Posterior vena cava (tissue), 2 donors: ENCODE measurements at regions of chr20 and their contacts with region 1.

Region 1: DNA sequence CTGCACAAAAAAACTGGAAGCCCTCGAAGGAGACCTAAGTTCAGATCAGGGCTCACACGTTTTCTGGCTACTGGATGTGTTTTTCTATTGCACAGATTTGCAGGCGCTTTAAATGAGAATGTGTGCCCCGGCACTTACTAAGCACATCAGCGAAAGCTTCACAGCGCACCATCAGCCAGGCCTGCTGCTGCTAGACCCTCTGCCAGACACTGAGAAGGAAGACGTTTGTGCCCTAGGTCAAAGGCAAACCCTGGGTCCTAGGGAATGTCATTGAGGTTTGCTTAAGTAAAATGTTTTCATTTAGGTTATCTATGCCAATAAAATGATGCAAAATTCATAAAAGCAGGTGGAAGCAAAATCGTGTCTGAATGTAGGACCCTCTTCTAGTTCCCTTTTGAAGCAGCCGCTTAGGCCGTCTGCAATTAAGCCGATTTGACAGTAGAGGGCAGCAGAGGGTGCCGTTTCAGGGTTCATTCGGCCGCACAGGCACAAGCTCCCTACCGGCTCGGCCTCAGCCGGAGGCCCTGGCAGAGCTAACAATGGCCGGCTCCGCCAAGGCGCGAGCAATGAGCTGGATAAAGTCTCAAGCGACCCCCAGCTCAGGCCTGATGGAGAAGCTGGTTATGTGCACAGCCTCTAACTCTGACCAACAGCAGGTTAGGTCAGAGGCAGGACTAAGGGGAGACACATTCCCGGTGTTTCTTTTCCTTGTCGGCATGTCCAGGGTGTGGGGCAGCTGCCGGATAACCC is 107.2 kb upstream of the FOXA2 start:
- DNase-seq: peak; percentile 94

Region 2: DNA sequence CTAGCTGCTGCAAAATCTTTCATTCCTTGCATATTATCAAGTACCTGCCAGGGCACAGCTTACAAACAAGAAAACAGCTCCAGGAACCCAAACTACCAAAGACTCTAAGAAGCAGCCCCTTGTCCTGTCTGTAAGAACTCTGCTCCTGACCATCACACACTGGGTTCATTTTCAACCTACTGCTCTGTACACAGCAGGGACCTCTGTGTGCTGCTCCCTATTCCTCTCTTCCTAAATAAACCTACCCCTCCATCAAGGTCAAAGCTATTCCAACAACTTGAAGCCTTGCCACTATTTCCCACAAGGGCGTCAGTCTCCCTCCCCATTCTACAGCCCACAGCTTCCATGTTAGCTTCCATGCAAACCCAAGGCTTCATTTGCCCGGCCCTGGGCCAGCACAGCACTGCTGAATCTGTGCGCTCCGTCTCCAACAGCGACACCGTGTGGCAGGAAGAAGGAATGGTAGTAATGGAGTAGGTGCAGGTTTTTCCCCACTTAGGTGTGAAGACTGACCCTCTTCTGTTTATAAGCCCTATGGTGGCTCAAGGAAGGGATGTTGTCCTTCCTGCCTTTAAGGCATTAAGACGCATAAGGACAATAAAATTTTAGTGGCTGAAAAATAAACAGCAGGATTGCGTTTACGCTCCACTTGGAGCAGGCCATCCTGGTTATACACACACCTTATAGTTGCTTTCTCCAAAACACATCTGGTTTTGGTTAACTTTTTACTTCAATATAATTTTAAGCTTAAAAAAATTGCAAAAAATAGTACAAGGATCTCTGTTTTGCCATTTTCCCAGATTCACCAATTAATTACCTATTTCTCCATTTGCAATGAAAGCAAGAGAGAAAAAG is 543.9 kb after region 1 on chr20:
- intact Hi-C with region 1: loop called in 1 of 2 experiments (anchors 5 kb)
- DNase-seq: peak; percentile 91

Region 3: GRCh38 chr20:23340524-23340923 is 649.0 kb after region 1 on chr20:
- intact Hi-C with region 1: loop called (anchors 5 kb)
- DNase-seq: no peak